ENCODE measurements at regions of chr6 and their contacts with region 1.

Region 1: DNA sequence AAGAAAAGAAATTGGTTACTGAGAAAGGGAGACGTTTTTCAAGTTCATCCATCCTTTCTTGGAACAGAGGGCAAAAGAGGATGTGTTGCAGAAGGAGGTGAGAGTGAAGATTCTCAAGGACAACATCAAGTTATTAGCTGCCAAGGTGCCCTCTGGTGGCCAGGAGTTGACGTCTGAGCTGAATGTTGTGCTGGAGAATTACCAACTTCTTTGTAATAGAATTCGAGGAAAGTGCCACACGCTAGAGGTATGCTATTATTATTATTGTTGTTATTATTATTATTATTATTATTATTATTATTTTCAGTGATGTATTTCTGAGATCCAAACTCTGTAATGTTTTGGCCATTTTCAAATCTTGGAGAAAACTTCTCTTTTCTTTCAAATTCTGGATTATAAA is 197.0 kb downstream of the UTRN start:
- DNase-seq: no peak

Region 2: DNA sequence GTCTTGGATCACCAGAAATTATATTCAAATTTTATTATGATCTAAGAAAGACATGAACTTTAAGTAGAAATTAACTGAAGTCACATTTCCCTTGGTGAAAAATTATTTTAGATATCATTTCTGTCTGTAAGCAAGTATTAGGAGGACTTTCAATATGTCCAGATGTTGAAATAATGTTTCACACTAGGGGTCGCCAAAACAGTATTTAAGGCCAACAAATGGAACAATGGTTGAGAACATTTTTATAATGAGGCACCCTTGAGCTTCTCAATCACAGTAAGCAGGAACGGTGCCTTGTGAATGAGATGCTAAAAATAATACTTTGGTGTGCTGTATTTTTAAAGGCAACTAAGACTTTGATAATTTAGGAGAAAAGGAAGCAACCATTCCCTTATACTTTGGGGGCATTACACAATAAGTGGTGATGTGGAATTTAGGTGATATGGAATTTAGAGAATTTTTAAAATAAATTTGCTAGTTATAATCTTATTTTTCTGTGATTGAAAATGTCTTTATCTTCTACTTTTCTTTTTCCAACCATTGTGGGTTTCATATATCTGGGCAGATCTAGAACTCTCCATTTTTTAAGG is 377.1 kb before region 1 on chr6:
- intact Hi-C with region 1: loop called (anchors 5 kb)
- DNase-seq: no peak

Region 3: GRCh38 chr6:144265390-144265789 is 216.8 kb before region 1 on chr6:
- intact Hi-C with region 1: loop called (anchors 5 kb)
- DNase-seq: no peak

Region 4: DNA sequence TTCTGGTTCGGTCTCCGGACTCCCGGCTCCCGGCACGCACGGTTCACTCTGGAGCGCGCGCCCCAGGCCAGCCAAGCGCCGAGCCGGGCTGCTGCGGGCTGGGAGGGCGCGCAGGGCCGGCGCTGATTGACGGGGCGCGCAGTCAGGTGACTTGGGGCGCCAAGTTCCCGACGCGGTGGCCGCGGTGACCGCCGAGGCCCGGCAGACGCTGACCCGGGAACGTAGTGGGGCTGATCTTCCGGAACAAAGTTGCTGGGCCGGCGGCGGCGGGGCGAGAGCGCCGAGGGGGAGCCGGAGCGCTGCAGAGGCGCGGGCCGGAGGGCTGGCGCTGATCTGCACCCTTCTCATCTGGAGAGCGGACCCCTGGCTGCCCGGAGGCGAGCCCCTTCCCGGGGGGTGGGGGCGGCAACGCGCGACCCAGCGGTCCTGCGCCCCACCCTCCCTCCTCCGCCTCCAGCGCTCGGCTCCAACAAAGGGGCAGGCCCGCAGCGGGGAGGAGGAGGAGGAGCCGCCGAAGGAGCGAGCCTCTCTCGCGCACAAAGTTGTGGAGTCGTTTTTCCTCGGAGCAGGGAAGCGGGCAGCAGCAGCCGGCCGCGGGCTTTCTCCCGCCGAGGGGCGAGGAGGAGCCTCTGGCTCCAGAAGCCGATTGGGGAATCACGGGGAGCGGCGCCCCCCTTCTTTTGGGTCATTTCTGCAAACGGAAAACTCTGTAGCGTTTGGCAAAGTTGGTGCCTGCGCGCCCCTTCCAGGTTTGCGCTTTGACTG is 197.2 kb before region 1 on chr6 and contains the start of gene UTRN:
- intact Hi-C with region 1: loop called (anchors 5 kb)
- DNase-seq: peak; percentile 90
- total RNA-seq, gene UTRN: 96.4 TPM

Measured in cardiac septum (tissue), 1 donor.